ENCODE measurements at regions of chr20 and their contacts with region 1.

Region 1: GRCh38 chr20:16801919-16802911 is 54.1 kb downstream of the OTOR start:
- DNase-seq: peak; percentile 71
- H3K4me3 Mint-ChIP-seq: no peak overlapping the region
- H3K27ac Mint-ChIP-seq: no peak overlapping the region
- H3K4me1 Mint-ChIP-seq: no peaks in the 10 kb centered on the region
- H3K27me3 Mint-ChIP-seq: peaks cover 19% of the 10 kb centered on the region

Region 2: DNA sequence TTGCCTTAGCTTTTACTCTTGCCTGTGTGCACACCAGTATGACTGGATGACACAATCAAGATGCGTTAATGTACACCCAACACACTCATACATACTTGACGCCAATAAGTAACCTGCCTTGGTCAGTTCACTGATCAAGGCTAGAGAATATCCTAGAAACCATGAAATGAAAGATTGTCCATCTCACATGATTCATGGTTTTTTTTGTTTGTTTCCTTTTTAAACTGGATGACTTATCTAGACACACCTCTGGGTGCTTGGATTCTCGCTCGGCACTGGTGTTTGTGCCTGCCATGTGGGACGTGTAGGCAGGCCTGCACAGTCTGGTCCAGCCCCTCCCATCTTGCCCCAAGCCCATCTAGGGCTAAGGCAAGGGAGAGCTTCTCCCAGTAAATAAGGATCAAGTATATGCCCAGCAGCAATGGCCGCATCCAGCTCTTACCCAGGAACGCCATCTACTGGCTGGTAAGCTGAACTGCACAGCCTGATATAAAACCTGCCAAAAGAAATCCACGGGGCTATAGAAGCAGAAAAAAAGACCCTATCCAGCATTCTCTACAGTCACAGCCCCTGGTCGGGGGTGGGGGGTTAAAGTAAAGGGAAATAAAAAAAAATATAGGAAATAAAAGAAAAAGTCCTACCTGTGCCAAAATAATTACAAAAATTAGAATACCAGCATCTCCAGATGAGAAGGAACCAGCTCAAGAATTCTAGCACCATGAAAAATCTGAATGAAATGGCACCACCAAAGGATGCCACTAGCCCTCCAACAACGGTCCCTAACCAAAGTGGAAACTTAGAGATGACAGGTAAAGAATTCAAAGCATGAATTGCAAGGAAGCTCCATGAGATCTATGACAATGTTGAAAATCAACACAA is 19.2 kb after region 1 on chr20:
- CTCF ChIA-PET with region 1: interaction called, 61 read pairs
- DNase-seq: peak; percentile 38
- H3K4me3 Mint-ChIP-seq: no peak overlapping the region
- H3K27ac Mint-ChIP-seq: peak overlapping the region; percentile 28
- H3K4me1 Mint-ChIP-seq: no peaks in the 10 kb centered on the region
- H3K27me3 Mint-ChIP-seq: peaks cover 9% of the 10 kb centered on the region

Region 3: DNA sequence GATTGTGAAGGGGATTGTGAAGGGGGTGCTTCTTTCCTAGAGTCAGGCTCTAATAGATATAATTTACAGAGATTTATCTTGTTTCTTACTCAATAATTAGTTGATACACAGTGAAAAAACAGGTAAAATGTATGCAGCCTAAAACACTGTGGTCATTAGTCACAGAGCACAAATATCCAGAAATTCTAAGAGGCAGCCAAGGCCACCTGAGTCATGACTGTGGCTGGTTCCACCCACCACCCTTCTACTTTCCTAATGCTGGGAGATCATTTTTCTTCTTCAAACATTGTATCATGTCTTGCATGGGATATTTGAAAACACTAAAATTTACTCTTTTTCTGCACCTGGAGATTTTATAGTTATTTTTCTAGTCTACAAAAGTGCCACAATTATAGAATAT is 127.5 kb after region 1 on chr20:
- CTCF ChIA-PET with region 1: no interaction called
- DNase-seq: no peak
- H3K4me3 Mint-ChIP-seq: no peak overlapping the region
- H3K27ac Mint-ChIP-seq: no peak overlapping the region
- H3K4me1 Mint-ChIP-seq: no peaks in the 10 kb centered on the region
- H3K27me3 Mint-ChIP-seq: no peaks in the 10 kb centered on the region

Region 4: GRCh38 chr20:17431621-17432364 is 629.6 kb after region 1 on chr20:
- CTCF ChIA-PET with region 1: interaction called, 34 read pairs
- DNase-seq: peak; percentile 61
- H3K4me3 Mint-ChIP-seq: no peak overlapping the region
- H3K27ac Mint-ChIP-seq: no peak overlapping the region
- H3K4me1 Mint-ChIP-seq: no peaks in the 10 kb centered on the region
- H3K27me3 Mint-ChIP-seq: peaks cover 20% of the 10 kb centered on the region

Measured in activated naive CD4-positive, alpha-beta T cell treated with anti-CD3 and anti-CD28 coated beads, Interleukin-2, amount 10 ng/mL, durations not matched to agents 7 days and 5 days (primary cell).